Prostate gland (tissue), 2 donors: ENCODE measurements at regions of chr2 and their contacts with region 1.

Region 1: DNA sequence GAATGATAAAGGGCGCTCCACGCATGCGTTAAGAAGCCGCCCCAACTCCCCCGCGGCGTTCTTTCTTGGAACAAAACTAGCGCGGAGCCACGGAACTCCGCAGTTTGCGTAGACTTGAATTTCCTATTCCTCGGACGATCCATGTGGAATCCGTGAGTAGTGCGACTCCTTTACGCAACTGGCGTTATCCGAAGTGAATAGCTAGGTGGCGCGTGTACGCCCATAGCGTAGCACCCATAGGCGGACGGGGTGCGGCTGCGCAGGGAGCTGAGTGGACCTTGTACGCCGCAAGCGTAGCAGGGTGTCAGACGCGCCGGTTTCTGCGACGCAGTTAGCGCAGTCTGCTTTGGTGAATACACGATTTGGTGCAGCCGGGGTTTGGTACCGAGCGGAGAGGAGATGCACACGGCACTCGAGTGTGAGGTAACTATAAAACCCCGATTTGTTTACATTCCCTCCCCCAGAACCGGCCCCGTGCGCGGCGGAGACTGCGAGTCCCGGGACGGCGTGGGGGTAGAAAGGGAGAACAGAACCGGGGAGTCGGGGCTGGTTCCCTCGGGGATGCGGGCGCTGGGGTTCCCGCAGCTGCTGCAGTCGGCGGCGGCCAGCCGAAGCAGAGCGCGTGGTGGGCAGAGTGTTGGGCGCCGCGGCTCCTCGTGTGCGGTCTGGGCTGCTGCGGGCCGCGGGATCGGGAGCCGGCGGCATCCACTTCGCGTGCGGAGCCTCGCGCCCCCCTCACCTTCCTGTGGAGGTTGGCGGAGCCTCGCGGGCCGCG is at the start of gene SLC39A10:
- DNase-seq: peak; percentile 98
- H3K4me3 ChIP-seq: peak within 1 kb of the TSS; percentile 94 to 97
- H3K27ac ChIP-seq: peak within 1 kb of the TSS; percentile 99
- H3K4me1 ChIP-seq: no peaks in the 10 kb centered on the region
- H3K27me3 ChIP-seq: no peaks in the 10 kb centered on the region
- CTCF ChIP-seq: peak in 3 of 4 experiments; percentile 36 to 76 (median 73)
- POLR2A ChIP-seq: peak; percentile 83
- total RNA-seq, gene SLC39A10: 26.3 to 27.6 TPM

Region 2: DNA sequence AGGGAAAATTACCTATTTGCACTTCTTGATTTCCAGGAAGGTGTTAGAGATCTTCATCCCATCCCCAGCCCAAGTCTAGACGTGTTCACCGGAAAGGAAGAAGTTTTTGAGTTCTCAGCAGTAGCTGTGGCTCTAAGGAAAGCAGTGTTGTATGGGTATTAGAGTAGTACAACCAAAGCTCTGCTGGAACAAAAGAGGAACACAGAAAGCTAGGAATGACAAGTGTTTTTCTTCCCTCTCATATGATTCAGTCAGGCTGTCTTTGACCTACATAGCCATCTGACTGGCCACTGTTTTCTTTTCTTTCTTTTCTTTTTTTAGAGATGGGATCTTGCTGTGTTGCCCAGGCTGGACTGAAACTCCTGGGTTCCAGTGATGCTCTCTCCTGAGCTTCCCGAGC is 82.7 kb before region 1 on chr2:
- intact Hi-C with region 1: loop called (anchors 5 kb)
- DNase-seq: no peak
- H3K4me3 ChIP-seq: no peak overlapping the region
- H3K27ac ChIP-seq: no peak overlapping the region
- H3K4me1 ChIP-seq: no peaks in the 10 kb centered on the region
- H3K27me3 ChIP-seq: no peaks in the 10 kb centered on the region
- CTCF ChIP-seq: no peak
- POLR2A ChIP-seq: no peak

Region 3: DNA sequence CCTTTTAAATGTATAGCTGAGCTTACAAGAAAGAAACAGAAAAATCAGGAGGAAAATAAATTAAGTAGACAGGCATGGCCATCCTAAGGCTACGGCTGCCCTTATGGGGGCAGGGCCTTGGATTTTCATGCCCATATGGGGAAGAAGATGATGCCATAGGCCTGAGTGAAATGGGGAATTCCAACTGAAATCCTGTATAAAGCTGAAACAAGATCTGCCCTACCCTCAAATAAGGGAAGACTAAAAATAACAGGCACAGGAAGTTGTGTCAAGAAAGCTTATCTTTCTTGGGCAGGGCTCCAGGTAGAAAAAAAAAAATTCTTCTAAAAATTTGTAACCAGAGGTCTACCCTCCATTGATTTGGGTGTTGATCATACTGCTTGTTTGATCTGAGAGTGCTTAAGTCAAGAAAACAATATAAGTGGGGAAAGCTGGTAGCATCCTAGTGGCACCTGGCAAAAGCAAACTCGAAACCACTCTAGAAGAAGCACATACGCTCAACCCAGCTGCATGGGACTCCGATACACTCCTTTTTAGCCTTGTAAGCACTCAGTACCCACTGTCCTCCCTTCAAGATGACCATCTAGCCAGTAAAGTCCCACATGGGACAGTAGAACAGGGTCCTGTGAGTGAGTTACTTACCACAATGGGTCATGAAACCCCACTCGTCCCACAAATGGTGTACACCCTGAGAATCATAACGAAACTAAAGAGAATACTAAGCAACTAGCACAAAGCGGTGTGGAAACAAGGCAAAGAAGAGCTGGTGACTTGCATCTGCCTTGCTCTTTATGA is 389.3 kb after region 1 on chr2:
- intact Hi-C with region 1: no loop called
- DNase-seq: no peak
- H3K4me3 ChIP-seq: no peak overlapping the region
- H3K27ac ChIP-seq: no peak overlapping the region
- H3K4me1 ChIP-seq: no peaks in the 10 kb centered on the region
- H3K27me3 ChIP-seq: no peaks in the 10 kb centered on the region
- CTCF ChIP-seq: no peak
- POLR2A ChIP-seq: no peak